Naive thymus-derived CD4-positive, alpha-beta T cell (primary cell): ENCODE measurements at regions of chr16 and their contacts with region 1.

Region 1: DNA sequence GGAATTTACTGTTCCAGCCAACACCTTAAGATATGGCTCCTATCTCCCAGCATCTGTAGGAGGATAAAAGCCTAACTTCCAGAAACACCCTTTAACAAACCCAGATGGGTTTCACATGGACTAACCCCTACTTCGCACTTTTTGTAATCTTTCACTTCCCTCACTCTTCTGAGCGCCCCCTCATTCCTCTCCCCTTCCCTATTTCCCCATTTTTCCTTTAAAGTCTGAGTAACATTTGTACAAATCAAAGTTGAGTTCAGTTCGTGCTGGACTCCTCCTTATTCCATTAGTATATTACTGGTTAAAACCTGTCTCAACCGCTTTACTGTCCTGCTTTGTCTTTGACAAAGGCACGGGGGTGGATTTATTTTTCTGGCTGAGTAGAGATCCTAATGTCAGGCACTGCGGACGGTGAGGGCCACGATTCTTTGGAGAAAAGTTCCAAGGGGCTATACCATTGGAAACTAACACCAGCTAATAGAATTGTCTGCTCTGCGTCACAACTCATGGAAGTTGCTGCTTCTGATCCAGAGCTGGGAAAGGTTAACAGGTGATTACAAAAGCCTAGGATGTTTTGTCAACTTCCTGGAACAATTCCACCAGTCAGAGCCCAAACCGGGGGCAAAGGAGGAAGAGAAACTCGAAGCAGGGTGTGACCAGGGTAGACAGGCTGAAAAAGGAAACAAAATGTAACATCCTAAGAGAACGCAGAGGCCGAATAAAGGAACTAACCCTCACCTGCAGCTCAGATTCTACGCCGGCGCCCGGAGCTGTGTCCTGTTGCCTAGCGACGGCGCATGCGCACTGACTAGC is 12.5 kb downstream of the TAT start:
- DNase-seq: peak in 1 of 9 donors; percentile 3
- ATAC-seq: no peak
- H3K4me3 ChIP-seq: peak overlapping the region; percentile 63
- H3K4me3 Mint-ChIP-seq: peak overlapping the region; percentile 83 to 98 (median 91)
- H3K27ac ChIP-seq: peak overlapping the region; percentile 75
- H3K27ac Mint-ChIP-seq: peak overlapping the region; percentile 92 to 98 (median 94)
- H3K4me1 ChIP-seq: peaks cover 13 to 15% of the 10 kb centered on the region in 2 donors
- H3K4me1 Mint-ChIP-seq: peaks cover 10 to 23% (median 16%) of the 10 kb centered on the region in 7 donors
- H3K27me3 ChIP-seq: no peaks in the 10 kb centered on the region
- H3K27me3 Mint-ChIP-seq: peaks cover 0 to 15% (median 0%) of the 10 kb centered on the region in 5 donors

Region 2: DNA sequence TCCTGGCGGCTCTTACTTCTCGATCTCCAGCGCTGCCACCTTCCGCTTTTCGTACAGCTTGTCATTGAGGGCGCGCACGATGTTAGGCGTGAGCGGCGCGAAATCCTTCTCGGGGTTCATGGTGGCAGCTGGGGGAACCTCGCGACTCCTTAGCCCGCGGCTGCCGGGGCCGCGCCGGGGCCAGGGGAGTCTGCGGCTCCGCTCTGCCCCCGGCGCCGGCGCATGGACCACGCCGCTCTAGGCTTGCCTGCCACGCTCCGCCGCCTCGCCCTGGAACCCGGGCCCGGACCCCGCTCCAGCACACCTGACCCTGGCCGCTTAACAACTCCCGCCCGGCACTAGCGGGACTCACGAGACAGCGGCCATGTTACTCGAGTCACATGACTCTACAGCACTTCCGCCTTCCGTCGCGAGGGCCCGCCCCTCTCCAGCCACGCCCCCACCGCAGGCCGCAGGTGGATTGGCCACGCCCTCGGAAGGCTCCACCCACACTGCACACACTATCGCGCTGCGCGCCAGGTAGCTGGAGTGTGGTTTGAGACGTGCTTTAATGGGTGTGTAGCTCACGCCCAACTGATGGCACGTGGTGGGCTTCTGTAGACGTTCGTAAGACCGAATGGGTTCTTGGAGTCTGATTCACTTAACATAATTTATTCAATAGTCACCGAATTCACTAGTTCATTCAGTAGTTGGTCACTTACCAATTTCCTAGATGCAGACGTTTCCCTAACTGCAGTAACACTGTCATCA is 763.4 kb before region 1 on chr16 and contains the start of gene VAC14:
- CTCF ChIA-PET with region 1: no interaction called
- POLR2A ChIA-PET with region 1: no interaction called
- intact Hi-C with region 1: loop called in 1 of 2 experiments (anchors 10 kb)
- DNase-seq: peak; percentile 96 to 99 (median 97)
- ATAC-seq: peak; percentile 99
- H3K4me3 ChIP-seq: peak within 1 kb of the TSS; percentile 90
- H3K4me3 Mint-ChIP-seq: peak within 1 kb of the TSS; percentile 90 to 98 (median 94)
- H3K27ac ChIP-seq: peak within 1 kb of the TSS; percentile 78
- H3K27ac Mint-ChIP-seq: peak within 1 kb of the TSS; percentile 84 to 95 (median 92)
- H3K4me1 ChIP-seq: peaks cover 11 to 17% of the 10 kb centered on the region in 2 donors
- H3K4me1 Mint-ChIP-seq: peaks cover 19 to 49% (median 44%) of the 10 kb centered on the region in 7 donors
- H3K27me3 ChIP-seq: no peaks in the 10 kb centered on the region
- H3K27me3 Mint-ChIP-seq: peaks cover 0 to 15% (median 0%) of the 10 kb centered on the region in 5 donors
- total RNA-seq, gene VAC14: 36.7 to 47.1 (median 45.9) TPM

Region 3: DNA sequence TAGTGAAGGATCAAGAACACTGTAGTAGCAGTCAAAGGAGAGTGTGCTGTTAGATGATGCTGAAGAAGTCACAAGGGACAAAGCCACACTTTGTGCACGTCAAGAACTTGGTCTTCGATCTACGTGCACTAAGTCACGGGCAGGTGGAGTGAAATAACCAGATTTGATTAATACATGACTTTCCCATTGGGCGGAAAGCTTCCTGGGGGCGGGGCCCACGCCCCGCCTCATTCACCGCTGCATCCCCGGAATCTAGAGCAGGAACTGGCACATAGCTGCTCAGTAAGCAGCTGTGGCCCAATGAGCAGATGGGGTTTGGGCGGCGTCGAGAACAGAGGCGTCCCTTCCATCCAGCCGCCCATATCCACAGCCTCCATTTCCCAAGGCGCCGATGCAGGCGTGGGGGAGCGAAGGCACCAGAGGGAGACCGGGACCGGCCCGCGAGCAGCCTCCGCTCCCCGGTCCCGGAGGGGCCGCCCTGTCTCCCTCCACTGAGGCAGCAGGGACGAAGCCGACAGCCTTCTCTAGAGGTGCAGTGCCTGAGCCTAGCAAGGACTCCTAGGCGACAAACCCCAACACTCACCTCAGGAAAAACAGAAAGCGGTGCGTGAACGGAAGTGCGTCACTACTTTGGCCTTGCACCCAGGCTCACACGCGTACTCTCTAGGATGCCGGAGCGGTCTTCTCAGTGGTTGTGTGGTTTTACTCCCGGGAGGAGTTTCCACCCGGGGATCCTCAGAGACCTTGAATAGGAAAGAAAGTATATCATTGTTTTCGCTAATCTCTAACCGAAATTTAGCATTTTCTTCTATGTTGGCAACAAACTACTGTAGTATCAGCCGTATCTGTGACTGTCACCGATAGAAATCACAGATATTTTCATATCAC is 80.1 kb before region 1 on chr16:
- CTCF ChIA-PET with region 1: no interaction called
- POLR2A ChIA-PET with region 1: interaction called, 5 read pairs
- intact Hi-C with region 1: loop called (anchors 1 to 2 kb)
- DNase-seq: peak; percentile 57 to 90 (median 86)
- ATAC-seq: peak; percentile 91
- H3K4me3 ChIP-seq: peak overlapping the region; percentile 89
- H3K4me3 Mint-ChIP-seq: peak overlapping the region; percentile 82 to 95 (median 91)
- H3K27ac ChIP-seq: peak overlapping the region; percentile 92
- H3K27ac Mint-ChIP-seq: peak overlapping the region; percentile 85 to 97 (median 96)
- H3K4me1 ChIP-seq: peaks cover 7 to 10% of the 10 kb centered on the region in 2 donors
- H3K4me1 Mint-ChIP-seq: peaks cover 13 to 23% (median 17%) of the 10 kb centered on the region in 7 donors
- H3K27me3 ChIP-seq: no peaks in the 10 kb centered on the region
- H3K27me3 Mint-ChIP-seq: peaks cover 0 to 4% (median 0%) of the 10 kb centered on the region in 5 donors

Region 4: DNA sequence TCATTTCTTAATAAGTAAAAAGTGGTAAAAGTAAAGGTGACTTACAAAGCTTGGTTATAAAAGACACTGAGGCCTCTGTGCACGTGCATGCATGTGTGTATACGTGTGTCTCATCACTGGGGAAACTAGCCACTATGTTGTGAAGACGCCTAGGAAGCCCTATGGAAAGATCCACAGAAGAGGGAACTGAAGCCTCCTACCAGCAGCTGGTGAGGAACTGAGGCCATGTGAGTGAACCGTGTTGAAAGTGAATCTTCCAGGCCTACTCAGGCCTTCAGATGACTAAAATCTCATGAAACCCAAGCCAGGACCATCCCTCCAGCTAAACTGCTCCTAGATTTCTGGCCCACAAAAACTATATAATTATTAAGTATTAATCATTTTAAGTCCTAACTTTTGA is 136.5 kb after region 1 on chr16:
- CTCF ChIA-PET with region 1: no interaction called
- POLR2A ChIA-PET with region 1: no interaction called
- intact Hi-C with region 1: no loop called
- DNase-seq: no peak
- ATAC-seq: peak; percentile 18
- H3K4me3 ChIP-seq: no peak overlapping the region
- H3K4me3 Mint-ChIP-seq: no peak overlapping the region
- H3K27ac ChIP-seq: no peak overlapping the region
- H3K27ac Mint-ChIP-seq: no peak overlapping the region
- H3K4me1 ChIP-seq: no peaks in the 10 kb centered on the region
- H3K4me1 Mint-ChIP-seq: peaks cover 4 to 18% (median 8%) of the 10 kb centered on the region in 7 donors
- H3K27me3 ChIP-seq: no peaks in the 10 kb centered on the region
- H3K27me3 Mint-ChIP-seq: no peaks in the 10 kb centered on the region

Region 5: DNA sequence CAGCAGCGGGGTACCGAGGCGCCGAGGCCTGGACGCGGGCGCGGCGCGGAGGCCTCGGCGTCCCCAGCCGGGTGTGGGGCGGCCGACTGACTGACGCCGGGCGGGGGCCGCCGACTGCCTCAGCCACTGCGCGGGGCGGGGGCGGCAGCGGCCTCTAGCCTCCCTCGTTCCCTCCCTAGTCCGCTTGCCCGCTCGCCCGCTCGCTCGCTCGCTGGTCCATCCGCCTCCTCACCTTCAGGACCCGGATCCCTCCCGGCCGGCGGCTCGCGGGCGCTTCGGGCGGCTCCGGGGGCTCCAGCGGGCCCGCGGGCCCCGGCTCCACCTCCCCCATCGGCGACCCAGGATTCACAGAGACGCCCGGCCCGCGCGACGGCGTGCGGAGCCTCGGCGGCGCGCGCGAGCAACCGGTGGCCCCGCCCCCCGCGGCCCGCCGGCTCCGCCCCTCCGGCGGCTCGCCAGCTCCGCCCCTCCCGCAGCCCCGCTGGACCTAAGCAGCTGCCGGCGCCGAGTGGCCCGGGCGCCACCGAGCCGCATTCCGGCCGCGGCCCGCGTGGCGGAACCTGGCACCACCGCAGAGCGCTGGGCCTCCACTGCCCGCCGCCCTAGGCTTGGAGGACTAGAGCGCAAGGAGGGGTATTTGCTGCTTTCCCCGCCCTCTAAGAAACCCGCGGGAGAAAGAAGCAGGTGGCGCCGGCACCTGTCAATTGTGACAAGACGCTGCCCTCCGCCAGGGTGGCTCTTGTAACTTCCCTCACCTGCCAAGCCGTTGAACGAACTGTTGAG is 159.4 kb after region 1 on chr16:
- CTCF ChIA-PET with region 1: no interaction called
- POLR2A ChIA-PET with region 1: no interaction called
- intact Hi-C with region 1: loop called (anchors 1 to 2 kb)
- DNase-seq: peak; percentile 81 to 93 (median 88)
- ATAC-seq: peak; percentile 93
- H3K4me3 ChIP-seq: peak overlapping the region; percentile 79
- H3K4me3 Mint-ChIP-seq: peak overlapping the region; percentile 80 to 97 (median 86)
- H3K27ac ChIP-seq: peak overlapping the region; percentile 79
- H3K27ac Mint-ChIP-seq: peak overlapping the region in 8 of 9 donors; percentile 30 to 92 (median 78)
- H3K4me1 ChIP-seq: peaks cover 9% of the 10 kb centered on the region in 2 donors
- H3K4me1 Mint-ChIP-seq: peaks cover 7 to 20% (median 19%) of the 10 kb centered on the region in 7 donors
- H3K27me3 ChIP-seq: no peaks in the 10 kb centered on the region
- H3K27me3 Mint-ChIP-seq: peaks cover 0 to 17% (median 0%) of the 10 kb centered on the region in 5 donors

Region 6: GRCh38 chr16:71894921-71895678 is 330.7 kb after region 1 on chr16 and contains the start of gene IST1:
- CTCF ChIA-PET with region 1: no interaction called
- POLR2A ChIA-PET with region 1: no interaction called
- intact Hi-C with region 1: loop called in 1 of 2 experiments (anchors 2 kb)
- DNase-seq: peak; percentile 88 to 98 (median 98)
- ATAC-seq: peak; percentile 97
- H3K4me3 ChIP-seq: peak within 1 kb of the TSS; percentile 99
- H3K4me3 Mint-ChIP-seq: peak within 1 kb of the TSS; percentile 95 to 99 (median 96)
- H3K27ac ChIP-seq: peak within 1 kb of the TSS; percentile 98
- H3K27ac Mint-ChIP-seq: peak within 1 kb of the TSS; percentile 92 to 98 (median 97)
- H3K4me1 ChIP-seq: peaks cover 22 to 25% of the 10 kb centered on the region in 2 donors
- H3K4me1 Mint-ChIP-seq: peaks cover 23 to 43% (median 30%) of the 10 kb centered on the region in 7 donors
- H3K27me3 ChIP-seq: no peaks in the 10 kb centered on the region
- H3K27me3 Mint-ChIP-seq: no peaks in the 10 kb centered on the region
- total RNA-seq, gene IST1: 176 to 303 (median 286) TPM

Region 7: GRCh38 chr16:72093448-72094265 is 529.3 kb after region 1 on chr16 and contains the starts of genes DHX38 and TXNL4B:
- CTCF ChIA-PET with region 1: no interaction called
- POLR2A ChIA-PET with region 1: interaction called, 5 read pairs
- intact Hi-C with region 1: loop called (anchors 1 to 2 kb)
- DNase-seq: peak; percentile 70 to 95 (median 92)
- ATAC-seq: peak; percentile 98
- H3K4me3 ChIP-seq: peak within 1 kb of the TSS; percentile 86
- H3K4me3 Mint-ChIP-seq: peak within 1 kb of the TSS; percentile 94 to 100 (median 98)
- H3K27ac ChIP-seq: peak within 1 kb of the TSS; percentile 93
- H3K27ac Mint-ChIP-seq: peak within 1 kb of the TSS; percentile 92 to 100 (median 99)
- H3K4me1 ChIP-seq: peaks cover 21 to 24% of the 10 kb centered on the region in 2 donors
- H3K4me1 Mint-ChIP-seq: peaks cover 33 to 70% (median 63%) of the 10 kb centered on the region in 7 donors
- H3K27me3 ChIP-seq: no peaks in the 10 kb centered on the region
- H3K27me3 Mint-ChIP-seq: no peaks in the 10 kb centered on the region
- total RNA-seq, gene DHX38: 90.1 to 113 (median 104) TPM
- total RNA-seq, gene TXNL4B: 12.5 to 20.9 (median 18.5) TPM